ENCODE measurements at regions of chr5 and their contacts with region 1.

Region 1: DNA sequence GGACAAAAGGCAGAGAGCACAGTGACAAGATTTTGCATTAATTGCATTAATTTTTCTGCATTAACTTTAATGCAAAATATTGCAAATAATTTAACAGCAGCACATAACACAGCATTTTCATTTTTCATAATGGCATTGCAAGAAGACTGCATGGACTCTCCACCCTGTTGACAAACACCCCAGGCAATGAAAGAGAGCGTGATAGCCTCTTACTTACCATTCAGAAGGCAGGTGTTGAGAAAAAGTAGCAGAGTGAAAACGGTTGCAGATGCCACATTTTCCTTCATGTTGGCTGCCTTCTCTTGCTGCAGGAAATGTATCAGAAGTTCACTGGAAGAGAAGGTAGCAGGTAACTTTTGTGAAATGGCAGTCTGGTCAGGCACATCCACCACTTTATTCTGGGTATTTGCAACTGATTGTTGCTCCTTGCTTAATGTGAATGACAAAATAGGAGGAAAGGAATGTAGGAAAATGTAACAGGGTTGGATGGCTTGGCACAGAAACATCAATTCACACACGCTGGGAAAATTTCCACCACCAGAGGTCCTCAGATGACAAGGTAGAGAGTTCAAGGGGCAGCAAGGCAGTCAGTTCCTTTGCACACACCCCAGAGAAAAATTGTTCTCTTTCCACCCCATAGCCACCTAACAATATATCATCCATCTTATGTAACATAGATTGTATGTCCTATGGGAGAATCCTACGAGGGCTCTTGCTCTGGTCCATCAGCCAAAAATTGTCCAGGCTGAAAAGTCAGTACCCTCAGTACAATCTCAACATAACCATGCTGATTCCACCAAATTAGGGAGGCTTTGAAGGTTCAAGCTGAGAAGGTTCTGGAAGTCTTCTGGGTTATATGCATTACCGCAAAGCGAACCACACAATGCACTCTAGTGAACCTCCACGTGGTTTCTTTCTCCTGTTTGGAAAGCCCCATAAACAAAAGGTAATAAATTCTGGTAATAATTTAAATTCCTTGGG is 41.9 kb upstream of the AGXT2 start:
- DNase-seq: peak; percentile 77
- H3K4me3 Mint-ChIP-seq: no peak overlapping the region
- H3K27ac Mint-ChIP-seq: no peak overlapping the region
- H3K4me1 Mint-ChIP-seq: no peaks in the 10 kb centered on the region
- H3K27me3 Mint-ChIP-seq: no peaks in the 10 kb centered on the region
- CTCF ChIP-seq: peak; percentile 86

Region 2: GRCh38 chr5:35182541-35183535 is 93.2 kb after region 1 on chr5:
- CTCF ChIA-PET with region 1: interaction called, 4 read pairs
- POLR2A ChIA-PET with region 1: no interaction called
- intact Hi-C with region 1: loop called (anchors 1 kb)
- DNase-seq: peak; percentile 75
- H3K4me3 Mint-ChIP-seq: no peak overlapping the region
- H3K27ac Mint-ChIP-seq: no peak overlapping the region
- H3K4me1 Mint-ChIP-seq: no peaks in the 10 kb centered on the region
- H3K27me3 Mint-ChIP-seq: peaks cover 20% of the 10 kb centered on the region
- CTCF ChIP-seq: peak; percentile 59

Region 3: DNA sequence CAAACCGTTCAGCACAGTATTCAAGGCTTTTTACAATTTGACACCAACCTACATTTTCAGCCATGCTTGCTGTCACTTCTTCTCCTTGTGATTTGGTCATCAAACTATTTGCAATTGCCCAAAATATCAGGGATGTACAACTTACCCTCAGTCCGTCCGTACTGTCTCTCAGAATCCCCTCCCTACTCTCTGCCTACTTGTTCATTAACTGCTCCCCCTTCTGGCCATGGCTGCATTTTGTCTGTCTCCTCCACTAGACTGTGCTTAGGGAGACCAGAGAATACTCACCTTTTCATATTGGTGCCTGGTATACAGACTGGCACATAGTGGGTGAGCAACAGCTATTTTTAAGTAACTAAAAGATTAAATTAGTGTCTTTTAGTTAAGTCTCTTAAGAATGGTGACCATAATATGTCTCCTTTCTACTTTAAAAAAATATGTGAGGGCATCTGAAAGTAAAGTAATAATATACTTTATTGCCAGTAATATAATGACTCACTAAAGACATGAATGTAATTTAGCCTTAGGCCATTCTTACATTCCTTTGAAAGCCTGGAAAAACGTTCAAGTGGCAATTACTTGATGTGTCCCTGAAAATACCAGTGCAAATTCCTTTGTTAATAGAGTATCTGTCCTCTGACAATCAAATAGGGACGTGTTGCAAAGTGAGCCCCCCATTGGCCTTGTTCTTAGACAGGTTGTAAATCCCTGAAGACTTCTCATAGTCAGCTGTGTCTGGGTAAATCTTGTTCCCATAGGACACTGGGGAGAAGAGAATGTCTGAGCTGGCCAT is 112.9 kb after region 1 on chr5:
- CTCF ChIA-PET with region 1: interaction called, 4 read pairs
- POLR2A ChIA-PET with region 1: no interaction called
- intact Hi-C with region 1: loop called (anchors 1 kb)
- DNase-seq: peak; percentile 74
- H3K4me3 Mint-ChIP-seq: no peak overlapping the region
- H3K27ac Mint-ChIP-seq: no peak overlapping the region
- H3K4me1 Mint-ChIP-seq: peaks cover 17% of the 10 kb centered on the region
- H3K27me3 Mint-ChIP-seq: peaks cover 14% of the 10 kb centered on the region
- CTCF ChIP-seq: peak; percentile 26

Region 4: DNA sequence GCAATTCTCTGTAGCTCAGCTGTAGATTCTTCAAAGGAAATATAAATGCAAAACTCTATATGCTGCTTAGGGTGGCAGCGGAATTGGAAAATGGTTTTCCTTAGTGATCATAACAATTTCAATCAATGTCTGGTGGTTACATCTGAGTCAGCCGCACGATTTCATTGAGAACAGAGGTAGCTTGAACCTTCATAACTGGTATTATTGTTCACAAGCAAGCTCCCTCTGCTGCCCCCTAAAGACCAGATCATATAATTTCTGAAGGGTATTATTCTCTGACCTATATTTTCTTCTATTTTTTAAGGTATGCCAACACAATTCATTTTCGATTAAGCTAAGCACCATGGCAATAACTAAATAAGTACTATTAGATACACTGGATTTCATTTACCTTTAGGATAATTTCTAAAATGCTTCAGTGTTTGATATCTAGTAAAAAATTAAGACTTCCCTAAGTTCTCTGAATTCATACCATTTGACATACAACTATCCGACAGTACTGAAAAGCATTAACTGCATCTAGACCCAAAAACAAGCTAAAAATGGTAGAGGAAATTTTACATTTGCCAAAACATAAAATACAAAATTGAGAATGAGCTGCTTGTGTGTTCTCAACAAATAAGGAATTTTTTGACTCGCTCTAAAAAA is 346.9 kb after region 1 on chr5:
- CTCF ChIA-PET with region 1: interaction called, 4 read pairs
- POLR2A ChIA-PET with region 1: no interaction called
- intact Hi-C with region 1: loop called (anchors 1 kb)
- DNase-seq: peak; percentile 77
- H3K4me3 Mint-ChIP-seq: no peak overlapping the region
- H3K27ac Mint-ChIP-seq: no peak overlapping the region
- H3K4me1 Mint-ChIP-seq: peaks cover 5% of the 10 kb centered on the region
- H3K27me3 Mint-ChIP-seq: peaks cover 30% of the 10 kb centered on the region
- CTCF ChIP-seq: peak; percentile 68

Region 5: GRCh38 chr5:35651002-35651756 is 561.6 kb after region 1 on chr5:
- CTCF ChIA-PET with region 1: interaction called, 3 read pairs
- POLR2A ChIA-PET with region 1: no interaction called
- intact Hi-C with region 1: loop called (anchors 10 kb)
- DNase-seq: peak; percentile 68
- H3K4me3 Mint-ChIP-seq: no peak overlapping the region
- H3K27ac Mint-ChIP-seq: no peak overlapping the region
- H3K4me1 Mint-ChIP-seq: no peaks in the 10 kb centered on the region
- H3K27me3 Mint-ChIP-seq: no peaks in the 10 kb centered on the region
- CTCF ChIP-seq: peak; percentile 49